CD4-positive, alpha-beta T cell (primary cell): ENCODE measurements at regions of chr2 and their contacts with region 1.

Region 1: GRCh38 chr2:157327621-157328500 is 2.2 kb upstream of the ERMN start:
- DNase-seq: peak; percentile 78 to 97 (median 88)
- ATAC-seq: peak; percentile 93
- H3K4me3 ChIP-seq: no peak overlapping the region
- H3K4me3 Mint-ChIP-seq: peak overlapping the region; percentile 61
- H3K27ac ChIP-seq: no peak overlapping the region
- H3K27ac Mint-ChIP-seq: peak overlapping the region; percentile 83
- H3K4me1 ChIP-seq: peaks cover 37% of the 10 kb centered on the region
- H3K4me1 Mint-ChIP-seq: peaks cover 56% of the 10 kb centered on the region
- H3K27me3 ChIP-seq: no peaks in the 10 kb centered on the region
- H3K27me3 Mint-ChIP-seq: no peaks in the 10 kb centered on the region
- CTCF ChIP-seq: peak; percentile 92

Region 2: GRCh38 chr2:157404363-157404762 is 76.5 kb after region 1 on chr2:
- CTCF ChIA-PET with region 1: interaction called, 24 read pairs
- POLR2A ChIA-PET with region 1: interaction called, 92 read pairs
- intact Hi-C with region 1: no loop called
- DNase-seq: peak; percentile 53 to 93 (median 66)
- ATAC-seq: peak; percentile 91
- H3K4me3 ChIP-seq: no peak overlapping the region
- H3K4me3 Mint-ChIP-seq: peak overlapping the region; percentile 74
- H3K27ac ChIP-seq: peak overlapping the region; percentile 58 to 94
- H3K27ac Mint-ChIP-seq: peak overlapping the region; percentile 99
- H3K4me1 ChIP-seq: peaks cover 33% of the 10 kb centered on the region
- H3K4me1 Mint-ChIP-seq: peaks cover 82% of the 10 kb centered on the region
- H3K27me3 ChIP-seq: no peaks in the 10 kb centered on the region
- H3K27me3 Mint-ChIP-seq: no peaks in the 10 kb centered on the region
- CTCF ChIP-seq: no peak

Region 3: GRCh38 chr2:157420771-157421323 is 93.0 kb after region 1 on chr2:
- CTCF ChIA-PET with region 1: interaction called, 17 read pairs
- POLR2A ChIA-PET with region 1: interaction called, 19 read pairs
- intact Hi-C with region 1: no loop called
- DNase-seq: peak in 3 of 14 experiments; percentile 63 to 73 (median 70)
- ATAC-seq: peak; percentile 8
- H3K4me3 ChIP-seq: no peak overlapping the region
- H3K4me3 Mint-ChIP-seq: peak overlapping the region; percentile 72
- H3K27ac ChIP-seq: peak overlapping the region; percentile 69
- H3K27ac Mint-ChIP-seq: peak overlapping the region; percentile 96
- H3K4me1 ChIP-seq: peaks cover 49% of the 10 kb centered on the region
- H3K4me1 Mint-ChIP-seq: peaks cover 80% of the 10 kb centered on the region
- H3K27me3 ChIP-seq: no peaks in the 10 kb centered on the region
- H3K27me3 Mint-ChIP-seq: no peaks in the 10 kb centered on the region
- CTCF ChIP-seq: no peak

Region 4: GRCh38 chr2:157433394-157433793 is 105.5 kb after region 1 on chr2:
- CTCF ChIA-PET with region 1: interaction called, 41 read pairs
- POLR2A ChIA-PET with region 1: interaction called, 51 read pairs
- intact Hi-C with region 1: loop called in 1 of 2 experiments (anchors 10 kb)
- DNase-seq: no peak
- ATAC-seq: peak; percentile 25
- H3K4me3 ChIP-seq: peak overlapping the region; percentile 72
- H3K4me3 Mint-ChIP-seq: peak overlapping the region; percentile 95
- H3K27ac ChIP-seq: peak overlapping the region; percentile 13 to 97
- H3K27ac Mint-ChIP-seq: peak overlapping the region; percentile 97
- H3K4me1 ChIP-seq: peaks cover 33% of the 10 kb centered on the region
- H3K4me1 Mint-ChIP-seq: peaks cover 93% of the 10 kb centered on the region
- H3K27me3 ChIP-seq: no peaks in the 10 kb centered on the region
- H3K27me3 Mint-ChIP-seq: no peaks in the 10 kb centered on the region
- CTCF ChIP-seq: no peak

Region 5: GRCh38 chr2:157468931-157469708 is 141.3 kb after region 1 on chr2:
- CTCF ChIA-PET with region 1: interaction called, 19 read pairs
- POLR2A ChIA-PET with region 1: interaction called, 5 read pairs
- intact Hi-C with region 1: no loop called
- DNase-seq: peak in 3 of 14 experiments; percentile 81 to 86 (median 84)
- ATAC-seq: peak; percentile 89
- H3K4me3 ChIP-seq: peak overlapping the region; percentile 11
- H3K4me3 Mint-ChIP-seq: peak overlapping the region; percentile 74
- H3K27ac ChIP-seq: peak overlapping the region; percentile 80 to 88
- H3K27ac Mint-ChIP-seq: peak overlapping the region; percentile 98
- H3K4me1 ChIP-seq: peaks cover 31% of the 10 kb centered on the region
- H3K4me1 Mint-ChIP-seq: peaks cover 64% of the 10 kb centered on the region
- H3K27me3 ChIP-seq: no peaks in the 10 kb centered on the region
- H3K27me3 Mint-ChIP-seq: no peaks in the 10 kb centered on the region
- CTCF ChIP-seq: no peak

Region 6: GRCh38 chr2:157497638-157498314 is 169.9 kb after region 1 on chr2:
- CTCF ChIA-PET with region 1: interaction called, 62 read pairs
- POLR2A ChIA-PET with region 1: interaction called, 7 read pairs
- intact Hi-C with region 1: loop called (anchors 2 to 5 kb)
- DNase-seq: peak in 4 of 14 experiments; percentile 8 to 66 (median 60)
- ATAC-seq: peak; percentile 96
- H3K4me3 ChIP-seq: no peak overlapping the region
- H3K4me3 Mint-ChIP-seq: no peak overlapping the region
- H3K27ac ChIP-seq: no peak overlapping the region
- H3K27ac Mint-ChIP-seq: no peak overlapping the region
- H3K4me1 ChIP-seq: peaks cover under 1% of the 10 kb centered on the region
- H3K4me1 Mint-ChIP-seq: peaks cover 28% of the 10 kb centered on the region
- H3K27me3 ChIP-seq: no peaks in the 10 kb centered on the region
- H3K27me3 Mint-ChIP-seq: no peaks in the 10 kb centered on the region
- CTCF ChIP-seq: peak; percentile 77

Region 7: GRCh38 chr2:157876066-157876787 is 548.4 kb after region 1 on chr2 and contains the start of gene ACVR1:
- CTCF ChIA-PET with region 1: no interaction called
- POLR2A ChIA-PET with region 1: no interaction called
- intact Hi-C with region 1: loop called in 1 of 2 experiments (anchors 10 kb)
- DNase-seq: peak; percentile 55 to 94 (median 74)
- ATAC-seq: peak; percentile 74
- H3K4me3 ChIP-seq: peak within 1 kb of the TSS; percentile 66
- H3K4me3 Mint-ChIP-seq: peak within 1 kb of the TSS; percentile 99
- H3K27ac ChIP-seq: peak within 1 kb of the TSS; percentile 49 to 70
- H3K27ac Mint-ChIP-seq: peak within 1 kb of the TSS; percentile 85
- H3K4me1 ChIP-seq: peaks cover 35% of the 10 kb centered on the region
- H3K4me1 Mint-ChIP-seq: peaks cover 66% of the 10 kb centered on the region
- H3K27me3 ChIP-seq: no peaks in the 10 kb centered on the region
- H3K27me3 Mint-ChIP-seq: no peaks in the 10 kb centered on the region
- CTCF ChIP-seq: no peak
- total RNA-seq, gene ACVR1: 14.3 to 16.7 TPM